ENCODE measurements at regions of chr2 and their contacts with region 1.

Region 1: DNA sequence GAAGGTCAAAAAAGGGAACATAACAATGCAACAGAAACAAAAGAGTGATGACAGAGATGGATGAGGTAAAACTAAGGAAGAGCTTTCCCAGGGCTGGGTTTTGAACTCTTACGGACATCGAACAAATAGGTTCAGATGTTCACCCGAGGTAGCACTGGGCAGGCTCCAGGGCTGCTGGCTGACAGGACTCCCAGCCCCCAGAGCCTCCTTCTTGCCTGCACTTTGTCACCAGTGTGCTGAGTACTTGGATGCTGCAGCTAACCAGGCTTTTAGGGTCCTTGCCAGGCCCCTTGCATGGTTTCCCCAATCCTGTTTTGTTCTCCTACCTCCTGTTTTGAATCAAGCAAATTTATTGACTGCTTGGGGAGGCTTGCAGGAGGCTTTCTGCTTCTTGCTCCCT is 322.9 kb downstream of the DYSF start:
- DNase-seq: no peak
- ATAC-seq: no peak
- H3K4me3 ChIP-seq: no peak overlapping the region
- H3K27ac ChIP-seq: no peak overlapping the region
- H3K4me1 ChIP-seq: peaks cover 17% of the 10 kb centered on the region
- H3K27me3 ChIP-seq: no peaks in the 10 kb centered on the region
- CTCF ChIP-seq: no peak

Region 2: DNA sequence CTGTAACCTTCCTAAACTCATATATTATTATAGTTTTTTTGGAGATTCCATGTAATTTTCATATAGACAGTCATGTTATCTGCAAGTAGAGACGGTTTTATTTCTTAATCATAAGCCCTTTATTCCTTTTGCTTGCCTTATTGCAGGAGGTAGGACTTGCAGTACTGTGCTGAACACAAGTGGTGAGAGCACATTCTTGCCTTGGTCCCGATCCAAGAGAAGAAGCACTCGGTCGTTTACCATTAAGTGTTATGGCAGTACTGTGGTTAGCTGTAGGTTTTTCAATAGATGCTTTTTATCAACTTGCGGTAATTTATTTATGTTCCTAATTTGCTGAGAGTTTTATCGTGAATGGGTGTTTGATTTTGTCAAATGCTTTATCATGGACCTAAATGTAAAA is 17.2 kb before region 1 on chr2:
- CTCF ChIA-PET with region 1: no interaction called
- POLR2A ChIA-PET with region 1: interaction called, 10 read pairs
- intact Hi-C with region 1: no loop called
- DNase-seq: no peak
- ATAC-seq: no peak
- H3K4me3 ChIP-seq: no peak overlapping the region
- H3K27ac ChIP-seq: no peak overlapping the region
- H3K4me1 ChIP-seq: peaks cover 17% of the 10 kb centered on the region
- H3K27me3 ChIP-seq: no peaks in the 10 kb centered on the region
- CTCF ChIP-seq: no peak